CD4-positive, alpha-beta T cell (primary cell): ENCODE measurements at regions of chr1 and their contacts with region 1.

Region 1: GRCh38 chr1:17419626-17420328 is 19.7 kb downstream of the RCC2 start:
- DNase-seq: peak; percentile 39 to 82 (median 62)
- ATAC-seq: peak; percentile 86
- H3K4me3 ChIP-seq: no peak overlapping the region
- H3K4me3 Mint-ChIP-seq: peak overlapping the region; percentile 38
- H3K27ac ChIP-seq: no peak overlapping the region
- H3K27ac Mint-ChIP-seq: peak overlapping the region; percentile 8
- H3K4me1 ChIP-seq: peaks cover 6% of the 10 kb centered on the region
- H3K4me1 Mint-ChIP-seq: peaks cover 4% of the 10 kb centered on the region
- H3K27me3 ChIP-seq: no peaks in the 10 kb centered on the region
- H3K27me3 Mint-ChIP-seq: no peaks in the 10 kb centered on the region
- CTCF ChIP-seq: peak; percentile 99

Region 2: DNA sequence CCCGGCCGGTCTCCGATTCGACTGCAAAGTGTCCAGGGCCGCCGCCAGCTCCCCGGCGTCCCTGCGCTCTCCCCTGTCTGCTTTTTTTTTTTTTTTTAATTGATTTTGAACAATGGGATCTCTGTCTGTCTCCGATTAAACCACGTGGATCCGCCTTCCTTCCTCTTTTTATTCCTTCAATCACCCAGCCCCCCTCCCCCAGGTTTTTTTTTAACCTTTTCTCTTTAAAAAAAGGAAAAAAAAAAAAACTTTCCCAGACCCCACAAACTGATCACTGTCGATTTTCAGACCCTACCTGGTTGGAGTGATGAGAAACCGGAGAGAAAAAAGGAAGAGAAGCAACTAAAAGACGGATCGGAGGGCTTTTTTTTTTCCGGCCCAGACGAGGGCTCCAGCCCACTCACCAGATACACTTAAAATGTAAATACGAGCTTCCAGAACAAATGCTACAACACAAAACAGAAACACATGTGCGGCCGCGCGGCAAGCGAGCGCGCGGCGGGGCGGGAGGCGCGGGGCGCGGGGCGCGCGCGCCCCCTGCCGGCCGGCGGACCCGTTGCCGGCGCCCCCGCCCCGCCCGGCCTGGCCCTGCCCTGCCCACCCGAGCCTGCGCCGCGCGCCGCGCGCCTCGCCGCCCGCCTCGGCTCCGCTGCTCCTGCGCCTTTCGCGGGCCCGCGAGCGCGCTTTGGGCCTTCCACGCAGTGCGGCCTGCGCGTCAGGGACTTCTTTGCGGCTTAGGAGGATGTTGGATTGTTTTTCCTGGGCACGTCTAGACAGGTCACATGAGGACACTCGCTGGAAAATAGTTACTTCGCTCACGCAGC is 19.7 kb after region 1 on chr1 and contains the start of gene RCC2:
- CTCF ChIA-PET with region 1: no interaction called
- POLR2A ChIA-PET with region 1: no interaction called
- intact Hi-C with region 1: loop called (anchors 1 to 2 kb)
- DNase-seq: peak; percentile 51 to 92 (median 68)
- ATAC-seq: peak; percentile 77
- H3K4me3 ChIP-seq: peak within 1 kb of the TSS; percentile 94
- H3K4me3 Mint-ChIP-seq: peak within 1 kb of the TSS; percentile 98
- H3K27ac ChIP-seq: peak within 1 kb of the TSS; percentile 77 to 78
- H3K27ac Mint-ChIP-seq: peak within 1 kb of the TSS; percentile 95
- H3K4me1 ChIP-seq: peaks cover 38% of the 10 kb centered on the region
- H3K4me1 Mint-ChIP-seq: peaks cover 45% of the 10 kb centered on the region
- H3K27me3 ChIP-seq: no peaks in the 10 kb centered on the region
- H3K27me3 Mint-ChIP-seq: no peaks in the 10 kb centered on the region
- CTCF ChIP-seq: no peak
- total RNA-seq, gene RCC2: 20.1 to 21.0 TPM

Region 3: DNA sequence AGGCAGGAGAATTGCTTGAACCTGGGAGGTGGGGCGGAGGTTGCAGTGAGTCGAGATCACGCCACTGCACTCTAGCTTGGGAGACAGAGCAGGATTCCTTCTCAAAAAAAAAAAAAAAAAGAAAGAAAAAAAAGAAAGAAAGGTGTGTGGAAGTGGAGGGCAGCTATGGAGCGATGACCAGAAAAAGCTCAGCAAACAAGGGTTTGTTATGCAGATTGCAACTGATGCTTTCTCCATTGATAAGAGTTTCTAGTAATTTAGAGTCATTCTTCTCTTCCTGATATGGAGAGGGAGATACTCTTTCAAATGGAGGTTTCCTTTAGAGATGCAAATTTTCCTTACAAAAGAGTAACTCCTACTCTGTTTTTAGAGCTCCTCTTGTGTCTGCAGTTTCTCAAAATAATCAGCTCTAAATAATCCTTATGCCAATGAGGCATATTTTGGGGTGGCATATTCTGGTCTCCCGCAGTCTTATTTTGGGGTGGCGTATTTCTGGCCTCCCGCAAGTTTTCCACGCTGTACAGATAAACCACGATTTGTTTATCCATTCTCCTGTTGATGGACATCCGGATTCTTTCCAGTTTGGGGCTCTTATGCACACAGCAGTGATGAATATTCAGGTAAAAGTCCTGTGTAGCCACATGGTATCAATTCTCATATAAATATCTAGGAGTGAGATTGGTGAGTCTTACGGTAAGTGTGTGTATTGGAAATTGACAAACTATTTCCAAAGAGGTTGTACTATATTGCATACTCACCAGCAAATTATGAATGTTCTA is 50.4 kb after region 1 on chr1:
- CTCF ChIA-PET with region 1: no interaction called
- POLR2A ChIA-PET with region 1: no interaction called
- intact Hi-C with region 1: loop called in 1 of 2 experiments (anchors 5 kb)
- DNase-seq: no peak
- ATAC-seq: no peak
- H3K4me3 ChIP-seq: no peak overlapping the region
- H3K4me3 Mint-ChIP-seq: no peak overlapping the region
- H3K27ac ChIP-seq: no peak overlapping the region
- H3K27ac Mint-ChIP-seq: no peak overlapping the region
- H3K4me1 ChIP-seq: no peaks in the 10 kb centered on the region
- H3K4me1 Mint-ChIP-seq: no peaks in the 10 kb centered on the region
- H3K27me3 ChIP-seq: no peaks in the 10 kb centered on the region
- H3K27me3 Mint-ChIP-seq: peaks cover 5% of the 10 kb centered on the region
- CTCF ChIP-seq: no peak

Region 4: GRCh38 chr1:17485280-17485679 is 65.5 kb after region 1 on chr1:
- CTCF ChIA-PET with region 1: no interaction called
- POLR2A ChIA-PET with region 1: no interaction called
- intact Hi-C with region 1: loop called in 1 of 2 experiments (anchors 2 kb)
- DNase-seq: peak in 3 of 14 experiments; percentile 10 to 30 (median 24)
- ATAC-seq: no peak
- H3K4me3 ChIP-seq: no peak overlapping the region
- H3K4me3 Mint-ChIP-seq: no peak overlapping the region
- H3K27ac ChIP-seq: no peak overlapping the region
- H3K27ac Mint-ChIP-seq: no peak overlapping the region
- H3K4me1 ChIP-seq: no peaks in the 10 kb centered on the region
- H3K4me1 Mint-ChIP-seq: no peaks in the 10 kb centered on the region
- H3K27me3 ChIP-seq: no peaks in the 10 kb centered on the region
- H3K27me3 Mint-ChIP-seq: peaks cover 24% of the 10 kb centered on the region
- CTCF ChIP-seq: no peak

Region 5: DNA sequence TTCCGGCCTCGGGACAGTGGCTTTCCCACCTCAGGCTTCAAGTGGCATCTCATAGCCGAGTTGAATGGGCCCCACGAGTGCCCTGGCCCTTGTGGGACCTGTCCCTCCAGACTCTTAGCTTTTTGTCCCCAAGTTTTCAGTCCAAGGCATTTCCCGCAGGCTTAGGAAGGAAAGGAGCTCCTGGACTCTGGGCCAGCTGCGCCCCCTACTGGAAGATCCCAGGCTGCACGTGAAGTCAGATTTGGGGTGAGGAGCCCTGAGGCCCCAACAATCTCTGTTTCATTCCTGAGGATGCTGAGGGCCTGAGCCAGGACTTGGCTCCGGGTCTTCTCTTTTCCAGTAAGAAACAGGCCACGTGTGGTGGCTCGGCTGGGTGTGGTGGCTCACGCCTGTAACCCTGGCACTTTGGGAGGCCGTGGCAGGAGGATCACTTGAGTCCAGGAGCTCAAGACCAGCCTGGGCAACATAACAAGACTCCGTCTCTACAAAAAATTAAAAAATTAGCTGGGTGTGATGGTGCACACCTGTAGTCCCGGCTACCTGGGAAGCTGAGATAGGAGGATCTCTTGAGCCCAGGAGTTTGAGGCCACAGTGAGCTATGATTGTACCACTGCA is 187.2 kb after region 1 on chr1:
- CTCF ChIA-PET with region 1: no interaction called
- POLR2A ChIA-PET with region 1: no interaction called
- intact Hi-C with region 1: loop called in 1 of 2 experiments (anchors 2 kb)
- DNase-seq: peak in 9 of 14 experiments; percentile 1 to 55 (median 19)
- ATAC-seq: no peak
- H3K4me3 ChIP-seq: no peak overlapping the region
- H3K4me3 Mint-ChIP-seq: no peak overlapping the region
- H3K27ac ChIP-seq: no peak overlapping the region
- H3K27ac Mint-ChIP-seq: no peak overlapping the region
- H3K4me1 ChIP-seq: no peaks in the 10 kb centered on the region
- H3K4me1 Mint-ChIP-seq: no peaks in the 10 kb centered on the region
- H3K27me3 ChIP-seq: no peaks in the 10 kb centered on the region
- H3K27me3 Mint-ChIP-seq: peaks cover 6% of the 10 kb centered on the region
- CTCF ChIP-seq: peak; percentile 34